GM13977 (cell line): ENCODE measurements at regions of chr11 and their contacts with region 1.

Region 1: DNA sequence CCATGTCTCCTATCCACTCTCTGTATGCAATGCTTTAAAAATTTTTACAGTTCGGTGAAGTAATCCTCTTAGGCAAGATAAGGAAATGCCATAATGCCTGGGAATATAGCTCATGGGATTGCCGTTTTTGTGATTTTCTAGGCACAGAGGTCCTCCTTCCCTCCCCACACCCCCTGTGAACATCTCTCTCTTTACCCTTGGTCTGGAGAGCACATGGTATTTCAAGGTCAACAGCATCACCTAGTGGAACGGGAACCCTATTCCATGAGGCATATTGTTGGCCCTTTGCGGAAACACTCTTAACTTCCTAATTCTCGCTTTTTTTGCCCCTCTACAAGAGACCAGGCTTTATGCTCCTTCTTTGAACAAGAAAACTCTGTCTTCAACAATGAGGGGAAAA is 8.8 kb downstream of the NXPE4 start:
- DNase-seq: no peak
- CTCF ChIP-seq: no peak

Region 2: DNA sequence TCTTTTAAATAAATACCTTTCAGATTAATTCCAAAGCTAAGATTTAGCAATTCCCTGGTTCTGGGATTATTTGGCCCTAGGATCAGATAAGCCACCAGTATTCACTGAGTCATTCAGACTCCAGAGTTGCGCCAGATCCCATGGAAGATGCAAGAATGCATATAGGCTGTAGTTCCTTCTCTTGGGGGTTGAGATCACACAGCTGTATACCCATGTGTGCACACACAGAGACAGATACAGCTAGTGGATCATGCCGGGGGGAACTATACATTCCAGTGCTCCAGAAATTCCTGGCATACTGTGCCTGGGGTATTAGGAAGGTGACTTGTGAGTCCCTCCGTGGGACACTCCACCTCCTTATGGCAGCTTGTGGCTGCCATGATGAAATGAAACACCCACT is 451.9 kb before region 1 on chr11:
- in situ Hi-C with region 1: no loop called
- DNase-seq: no peak
- CTCF ChIP-seq: no peak

Region 3: GRCh38 chr11:114340311-114341131 is 246.3 kb before region 1 on chr11:
- in situ Hi-C with region 1: loop called (anchors 25 kb)
- DNase-seq: peak; percentile 18
- CTCF ChIP-seq: peak; percentile 81

Region 4: GRCh38 chr11:114738954-114739353 is 152.2 kb after region 1 on chr11:
- in situ Hi-C with region 1: no loop called
- DNase-seq: peak; percentile 39
- CTCF ChIP-seq: peak; percentile 90